AG04450 (cell line): ENCODE measurements at regions of chr7 and their contacts with region 1.

Region 1: GRCh38 chr7:113159746-113160339 is 41.5 kb upstream of the SMIM30 start:
- DNase-seq: peak; percentile 3
- H3K4me3 ChIP-seq: no peak overlapping the region
- H3K27ac ChIP-seq: no peak overlapping the region
- H3K27me3 ChIP-seq: no peaks in the 10 kb centered on the region
- CTCF ChIP-seq: peak; percentile 91

Region 2: GRCh38 chr7:112970771-112971170 is 189.1 kb before region 1 on chr7:
- CTCF ChIA-PET with region 1: no interaction called
- POLR2A ChIA-PET with region 1: no interaction called
- DNase-seq: no peak
- H3K4me3 ChIP-seq: no peak overlapping the region
- H3K27ac ChIP-seq: no peak overlapping the region
- H3K27me3 ChIP-seq: no peaks in the 10 kb centered on the region
- CTCF ChIP-seq: no peak

Region 3: GRCh38 chr7:113033959-113034358 is 125.9 kb before region 1 on chr7:
- CTCF ChIA-PET with region 1: no interaction called
- POLR2A ChIA-PET with region 1: no interaction called
- DNase-seq: no peak
- H3K4me3 ChIP-seq: no peak overlapping the region
- H3K27ac ChIP-seq: no peak overlapping the region
- H3K27me3 ChIP-seq: no peaks in the 10 kb centered on the region
- CTCF ChIP-seq: no peak

Region 4: GRCh38 chr7:113100121-113100603 is 59.7 kb before region 1 on chr7:
- CTCF ChIA-PET with region 1: interaction called, 12 read pairs
- POLR2A ChIA-PET with region 1: no interaction called
- DNase-seq: no peak
- H3K4me3 ChIP-seq: no peak overlapping the region
- H3K27ac ChIP-seq: no peak overlapping the region
- H3K27me3 ChIP-seq: no peaks in the 10 kb centered on the region
- CTCF ChIP-seq: no peak

Region 5: GRCh38 chr7:113137241-113137640 is 22.6 kb before region 1 on chr7:
- CTCF ChIA-PET with region 1: interaction called, 25 read pairs
- POLR2A ChIA-PET with region 1: no interaction called
- DNase-seq: no peak
- H3K4me3 ChIP-seq: no peak overlapping the region
- H3K27ac ChIP-seq: no peak overlapping the region
- H3K27me3 ChIP-seq: no peaks in the 10 kb centered on the region
- CTCF ChIP-seq: no peak

Region 6: GRCh38 chr7:113179313-113179712 is 19.5 kb after region 1 on chr7:
- CTCF ChIA-PET with region 1: interaction called, 107 read pairs
- POLR2A ChIA-PET with region 1: no interaction called
- DNase-seq: no peak
- H3K4me3 ChIP-seq: no peak overlapping the region
- H3K27ac ChIP-seq: no peak overlapping the region
- H3K27me3 ChIP-seq: no peaks in the 10 kb centered on the region
- CTCF ChIP-seq: no peak

Region 7: GRCh38 chr7:113217314-113217713 is 57.5 kb after region 1 on chr7:
- CTCF ChIA-PET with region 1: interaction called, 19 read pairs
- POLR2A ChIA-PET with region 1: no interaction called
- DNase-seq: no peak
- H3K4me3 ChIP-seq: no peak overlapping the region
- H3K27ac ChIP-seq: no peak overlapping the region
- H3K27me3 ChIP-seq: no peaks in the 10 kb centered on the region
- CTCF ChIP-seq: no peak

Region 8: GRCh38 chr7:113421696-113422330 is 262.0 kb after region 1 on chr7:
- CTCF ChIA-PET with region 1: interaction called, 114 read pairs
- POLR2A ChIA-PET with region 1: no interaction called
- DNase-seq: peak; percentile 69
- H3K4me3 ChIP-seq: no peak overlapping the region
- H3K27ac ChIP-seq: no peak overlapping the region
- H3K27me3 ChIP-seq: no peaks in the 10 kb centered on the region
- CTCF ChIP-seq: peak; percentile 91